A549 (cell line): ENCODE measurements at regions of chr22 and their contacts with region 1.

Region 1: DNA sequence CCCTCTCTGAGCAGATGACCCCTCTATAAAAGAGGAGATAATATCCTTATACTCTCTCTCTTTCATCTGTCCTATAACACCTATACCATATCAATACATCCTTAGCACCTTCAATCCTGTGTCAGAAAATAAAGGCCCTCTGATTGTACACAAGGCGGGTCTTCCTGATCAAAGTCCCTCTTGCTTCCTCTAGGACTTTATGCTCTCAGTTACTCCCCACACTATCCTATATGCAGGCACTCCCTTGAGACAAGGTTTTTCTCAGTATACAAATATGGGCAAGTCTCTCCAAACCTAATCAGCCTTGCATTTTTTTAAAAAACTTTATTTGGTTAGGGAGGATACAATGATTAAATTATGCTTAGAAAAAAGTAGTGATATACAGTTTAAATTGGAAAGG is 17.3 kb upstream of the HORMAD2 start:
- DNase-seq: no peak
- ATAC-seq: no peak
- H3K4me3 ChIP-seq: no peak overlapping the region
- H3K27ac ChIP-seq: no peak overlapping the region
- H3K4me1 ChIP-seq: no peaks in the 10 kb centered on the region
- CTCF ChIP-seq: no peak
- EP300 ChIP-seq: no peak
- POLR2A ChIP-seq: no peak
- RAD21 ChIP-seq: no peak

Region 2: DNA sequence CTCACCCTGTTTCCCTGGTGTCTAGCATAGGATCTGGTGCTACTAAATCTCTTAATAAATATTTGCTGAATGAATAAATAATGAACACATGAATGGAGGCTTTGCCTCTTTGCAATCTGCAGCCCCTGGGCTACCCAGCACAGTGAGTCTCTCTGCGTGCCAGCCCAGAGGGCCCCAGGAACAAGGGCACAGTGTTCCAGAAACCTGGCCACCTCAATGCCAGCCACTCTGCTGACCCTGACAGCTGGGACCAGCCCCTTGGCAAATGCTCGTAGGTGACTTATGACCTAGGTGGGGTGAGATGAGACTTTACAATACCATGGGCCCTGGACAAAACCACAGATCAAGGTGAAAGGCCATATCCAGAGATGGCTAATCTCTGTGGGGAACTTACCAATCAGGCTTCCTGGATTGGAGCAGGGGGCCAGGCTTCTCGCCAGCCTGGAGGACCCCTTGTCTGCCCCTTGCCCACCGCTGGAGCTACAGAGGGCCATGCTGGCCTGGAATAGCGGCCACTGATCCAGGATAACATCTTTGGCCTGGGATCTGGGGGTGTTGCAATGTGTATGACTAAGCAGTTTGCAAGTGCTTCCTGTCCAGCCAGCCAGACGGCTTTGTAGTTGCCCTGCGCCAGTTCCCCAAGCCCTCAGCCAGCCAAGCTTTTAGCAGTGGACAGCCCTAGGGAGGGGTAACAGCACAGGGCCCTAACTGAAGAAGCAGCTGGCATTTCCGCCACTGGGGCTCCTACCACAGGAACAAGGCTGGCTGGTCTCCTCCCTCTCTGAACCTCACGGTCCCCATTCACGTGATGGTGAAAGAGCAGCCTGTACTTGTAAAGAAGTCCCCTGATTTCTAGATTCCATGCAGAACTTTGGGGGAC is 263.9 kb before region 1 on chr22:
- CTCF ChIA-PET with region 1: no interaction called
- POLR2A ChIA-PET with region 1: interaction called, 10 read pairs
- DNase-seq: peak; percentile 78 to 87
- ATAC-seq: peak; percentile 94 to 97
- H3K4me3 ChIP-seq: no peak overlapping the region
- H3K27ac ChIP-seq: peak overlapping the region; percentile 97
- H3K4me1 ChIP-seq: peaks cover 22% of the 10 kb centered on the region
- CTCF ChIP-seq: no peak
- EP300 ChIP-seq: no peak
- POLR2A ChIP-seq: no peak
- RAD21 ChIP-seq: no peak

Region 3: GRCh38 chr22:29937940-29938693 is 124.8 kb before region 1 on chr22:
- CTCF ChIA-PET with region 1: no interaction called
- POLR2A ChIA-PET with region 1: no interaction called
- DNase-seq: no peak
- ATAC-seq: no peak
- H3K4me3 ChIP-seq: no peak overlapping the region
- H3K27ac ChIP-seq: no peak overlapping the region
- H3K4me1 ChIP-seq: peaks cover 12% of the 10 kb centered on the region; the same call in 2 of the 3 replicates
- CTCF ChIP-seq: no peak
- EP300 ChIP-seq: no peak
- POLR2A ChIP-seq: no peak
- RAD21 ChIP-seq: no peak